Right cardiac atrium (tissue), 5 donors: ENCODE measurements at regions of chr2 and their contacts with region 1.

Region 1: GRCh38 chr2:213806125-213806726 is 522.0 kb downstream of the SPAG16 start:
- DNase-seq: no peak
- ATAC-seq: no peak
- H3K4me3 ChIP-seq: no peak overlapping the region
- H3K27ac ChIP-seq: no peak overlapping the region
- H3K4me1 ChIP-seq: no peaks in the 10 kb centered on the region
- H3K27me3 ChIP-seq: no peaks in the 10 kb centered on the region

Region 2: GRCh38 chr2:212711856-212712255 is 1094.4 kb before region 1 on chr2:
- intact Hi-C with region 1: no loop called
- DNase-seq: no peak
- ATAC-seq: no peak
- H3K4me3 ChIP-seq: no peak overlapping the region
- H3K27ac ChIP-seq: no peak overlapping the region
- H3K4me1 ChIP-seq: peaks cover 2% of the 10 kb centered on the region
- H3K27me3 ChIP-seq: no peaks in the 10 kb centered on the region

Region 3: DNA sequence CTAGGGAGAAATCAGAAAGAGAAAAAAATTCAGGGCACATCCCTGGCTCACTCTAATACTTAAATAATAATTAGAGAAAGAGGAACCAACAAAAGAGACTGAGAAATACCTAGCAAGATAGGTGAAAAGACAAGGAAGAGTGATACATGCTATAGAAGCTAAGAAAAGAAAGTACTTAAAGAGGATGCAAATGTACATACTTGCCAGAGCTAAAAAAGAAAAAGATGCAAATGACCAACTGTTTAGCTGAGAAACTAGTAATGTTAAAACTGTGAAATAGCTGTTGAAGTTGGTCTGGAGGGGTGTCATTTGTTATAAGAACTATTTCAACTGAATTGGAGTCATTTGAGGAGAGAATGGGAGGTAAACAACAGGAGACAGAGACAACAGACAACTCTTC is 109.8 kb before region 1 on chr2:
- intact Hi-C with region 1: no loop called
- DNase-seq: no peak
- ATAC-seq: no peak
- H3K4me3 ChIP-seq: no peak overlapping the region
- H3K27ac ChIP-seq: no peak overlapping the region
- H3K4me1 ChIP-seq: no peaks in the 10 kb centered on the region
- H3K27me3 ChIP-seq: no peaks in the 10 kb centered on the region

Region 4: DNA sequence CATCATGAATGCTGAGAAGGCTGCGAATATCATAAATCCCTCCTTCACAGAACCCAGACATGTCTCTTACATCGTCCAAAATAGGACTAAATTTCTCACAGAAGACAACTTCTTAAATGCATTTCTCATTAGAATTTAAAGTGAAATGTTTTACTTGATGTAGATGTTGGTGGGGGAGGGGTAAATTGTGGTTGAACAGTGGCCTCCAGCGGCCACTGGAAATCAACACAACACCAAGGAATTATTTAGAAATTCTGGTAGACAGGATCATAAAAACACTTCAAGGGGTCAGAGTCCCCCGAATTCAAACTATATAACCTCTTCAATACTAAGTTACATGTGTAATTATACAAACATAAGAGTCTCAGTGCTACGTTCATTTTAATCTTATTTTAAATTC is 1196.3 kb after region 1 on chr2:
- intact Hi-C with region 1: loop called in 1 of 4 experiments (anchors 5 kb)
- DNase-seq: no peak
- ATAC-seq: no peak
- H3K4me3 ChIP-seq: no peak overlapping the region
- H3K27ac ChIP-seq: no peak overlapping the region
- H3K4me1 ChIP-seq: no peaks in the 10 kb centered on the region
- H3K27me3 ChIP-seq: no peaks in the 10 kb centered on the region